Left ventricle myocardium superior (tissue), 1 donor: ENCODE measurements at regions of chr1 and their contacts with region 1.

Region 1: GRCh38 chr1:74771913-74772515 is 39.1 kb downstream of the TYW3 start:
- DNase-seq: no peak
- ATAC-seq: no peak

Region 2: DNA sequence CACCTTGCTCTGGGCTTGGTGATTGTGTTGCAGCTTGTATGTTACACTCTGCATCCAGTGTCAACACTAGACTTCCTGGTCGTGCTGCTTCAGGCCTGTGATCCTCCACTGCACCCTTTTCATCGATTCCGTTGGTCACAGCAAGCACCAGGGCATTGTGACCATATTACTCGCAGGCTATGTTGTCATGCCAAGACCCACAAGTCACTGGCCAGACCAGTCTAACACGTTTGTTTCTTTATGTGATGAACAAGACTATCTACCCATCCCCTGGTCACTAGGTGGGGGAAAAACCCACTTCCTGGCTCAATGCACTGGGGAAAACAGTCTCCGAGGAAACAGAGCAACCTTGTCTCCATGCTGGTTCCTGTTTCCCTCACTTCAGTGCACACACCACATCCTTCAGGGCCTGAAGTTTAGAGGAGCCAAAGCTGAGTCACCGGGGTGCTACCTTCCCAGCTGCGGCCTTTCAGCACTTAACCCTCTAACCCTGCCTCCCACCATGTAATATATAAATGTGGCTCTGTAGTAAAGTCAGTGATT is 119.3 kb before region 1 on chr1:
- intact Hi-C with region 1: no loop called
- DNase-seq: no peak
- ATAC-seq: no peak

Region 3: DNA sequence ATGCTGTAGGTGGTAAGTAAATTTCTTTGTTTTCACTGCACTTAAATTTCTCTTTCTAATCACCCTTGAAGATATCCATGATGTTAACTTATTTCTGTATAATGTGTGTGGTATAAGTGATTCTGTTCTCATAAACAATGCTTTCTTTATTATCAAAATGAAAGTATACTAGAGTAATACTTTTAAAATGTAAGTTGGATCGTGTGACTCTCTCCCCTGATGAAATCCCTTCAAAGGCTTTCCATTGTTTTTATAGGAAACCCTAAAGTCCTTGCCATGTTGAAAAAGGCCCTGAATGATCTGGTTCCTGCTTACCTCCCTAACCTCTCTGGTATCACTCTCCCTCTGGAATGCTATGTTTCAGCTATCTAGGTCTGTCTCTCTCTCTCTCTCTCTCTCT is 171.0 kb after region 1 on chr1:
- intact Hi-C with region 1: no loop called
- DNase-seq: no peak
- ATAC-seq: no peak

Region 4: GRCh38 chr1:75203415-75204277 is 431.6 kb after region 1 on chr1:
- intact Hi-C with region 1: loop called (anchors 2 kb)
- DNase-seq: no peak
- ATAC-seq: no peak

Region 5: GRCh38 chr1:75423616-75424015 is 651.6 kb after region 1 on chr1:
- intact Hi-C with region 1: no loop called
- DNase-seq: no peak
- ATAC-seq: peak; percentile 15